ENCODE measurements at regions of chr1 and their contacts with region 1.

Region 1: DNA sequence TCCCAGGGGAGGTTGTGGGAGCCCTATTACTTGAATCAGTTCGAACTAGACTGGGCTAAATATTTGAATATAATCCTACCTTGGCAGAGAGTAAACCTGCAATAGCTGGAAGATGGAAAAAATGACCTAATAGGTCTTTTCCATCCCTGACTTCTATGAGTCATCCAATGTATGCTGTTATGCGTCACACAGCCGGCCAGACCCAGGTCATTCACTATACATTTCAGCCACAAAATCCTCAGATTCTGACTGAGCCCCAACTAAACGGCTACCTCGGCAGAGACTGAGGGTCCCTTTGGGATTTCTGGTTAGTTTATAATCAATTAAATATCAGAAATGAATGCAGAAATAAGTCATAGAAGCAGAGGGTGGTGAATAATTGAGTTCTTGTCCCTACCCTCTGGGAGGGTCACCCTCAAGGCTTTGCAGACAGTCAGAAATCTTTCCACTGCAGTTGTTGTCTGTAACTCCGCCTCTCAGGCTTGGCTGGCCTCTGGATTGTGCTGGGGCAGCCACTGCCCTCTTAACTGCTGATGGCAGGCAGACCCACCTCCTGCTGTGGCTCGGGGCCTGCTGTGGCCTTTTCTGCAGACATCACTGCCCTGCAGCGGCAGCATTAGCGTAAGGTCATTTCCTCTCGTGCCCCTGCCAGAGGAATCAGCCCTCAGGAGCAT is 240.5 kb downstream of the TGFB2 start:
- DNase-seq: no peak
- H3K4me3 ChIP-seq: no peak overlapping the region
- H3K27ac ChIP-seq: no peak overlapping the region
- H3K4me1 ChIP-seq: peaks cover 0 to 6% of the 10 kb centered on the region in 2 donors
- H3K27me3 ChIP-seq: no peaks in the 10 kb centered on the region
- CTCF ChIP-seq: no peak

Region 2: GRCh38 chr1:218339267-218339831 is 246.3 kb before region 1 on chr1:
- intact Hi-C with region 1: loop called (anchors 5 kb)
- DNase-seq: no peak
- H3K4me3 ChIP-seq: no peak overlapping the region
- H3K27ac ChIP-seq: no peak overlapping the region
- H3K4me1 ChIP-seq: no peaks in the 10 kb centered on the region
- H3K27me3 ChIP-seq: no peaks in the 10 kb centered on the region
- CTCF ChIP-seq: peak; percentile 50 to 76 (median 70)

Measured in ascending aorta (tissue), 2 donors.